ENCODE measurements at regions of chr9 and their contacts with region 1.

Region 1: GRCh38 chr9:86749894-86750255 is 197.4 kb downstream of the GAS1 start:
- DNase-seq: no peak
- H3K4me3 ChIP-seq: no peak overlapping the region
- H3K27ac ChIP-seq: no peak overlapping the region
- H3K4me1 ChIP-seq: peaks cover 0 to 21% (median 11%) of the 10 kb centered on the region in 4 donors
- H3K27me3 ChIP-seq: no peaks in the 10 kb centered on the region
- CTCF ChIP-seq: no peak
- EP300 ChIP-seq: no peak
- POLR2A ChIP-seq: no peak

Region 2: GRCh38 chr9:86700629-86701028 is 49.2 kb before region 1 on chr9:
- intact Hi-C with region 1: loop called (anchors 5 kb)
- DNase-seq: no peak
- H3K4me3 ChIP-seq: no peak overlapping the region
- H3K27ac ChIP-seq: peak overlapping the region in 3 of 4 donors; percentile 9 to 27 (median 16)
- H3K4me1 ChIP-seq: peaks cover 4 to 45% (median 23%) of the 10 kb centered on the region in 4 donors
- H3K27me3 ChIP-seq: no peaks in the 10 kb centered on the region
- CTCF ChIP-seq: no peak
- EP300 ChIP-seq: no peak
- POLR2A ChIP-seq: no peak

Region 3: GRCh38 chr9:86885232-86885631 is 135.4 kb after region 1 on chr9:
- intact Hi-C with region 1: no loop called
- DNase-seq: no peak
- H3K4me3 ChIP-seq: no peak overlapping the region
- H3K27ac ChIP-seq: no peak overlapping the region
- H3K4me1 ChIP-seq: no peaks in the 10 kb centered on the region
- H3K27me3 ChIP-seq: no peaks in the 10 kb centered on the region
- CTCF ChIP-seq: no peak
- EP300 ChIP-seq: no peak
- POLR2A ChIP-seq: no peak

Measured in esophagus muscularis mucosa (tissue), 4 donors.